Natural killer cell (primary cell): ENCODE measurements at regions of chr19 and their contacts with region 1.

Region 1: GRCh38 chr19:40603389-40604135 is 2.4 kb downstream of the LTBP4 start:
- DNase-seq: peak; percentile 92 to 98
- ATAC-seq: peak; percentile 77 to 89 (median 78)
- H3K4me3 ChIP-seq: peak overlapping the region; percentile 22
- H3K4me3 Mint-ChIP-seq: peak overlapping the region; percentile 89
- H3K27ac ChIP-seq: peak overlapping the region; percentile 2
- H3K27ac Mint-ChIP-seq: peak overlapping the region; percentile 75 to 87
- H3K4me1 ChIP-seq: peaks cover 74% of the 10 kb centered on the region
- H3K4me1 Mint-ChIP-seq: peaks cover 37 to 70% of the 10 kb centered on the region in 2 donors
- H3K27me3 ChIP-seq: peaks cover 36% of the 10 kb centered on the region
- H3K27me3 Mint-ChIP-seq: peaks cover 8 to 37% of the 10 kb centered on the region in 2 donors
- CTCF ChIP-seq: no peak

Region 2: DNA sequence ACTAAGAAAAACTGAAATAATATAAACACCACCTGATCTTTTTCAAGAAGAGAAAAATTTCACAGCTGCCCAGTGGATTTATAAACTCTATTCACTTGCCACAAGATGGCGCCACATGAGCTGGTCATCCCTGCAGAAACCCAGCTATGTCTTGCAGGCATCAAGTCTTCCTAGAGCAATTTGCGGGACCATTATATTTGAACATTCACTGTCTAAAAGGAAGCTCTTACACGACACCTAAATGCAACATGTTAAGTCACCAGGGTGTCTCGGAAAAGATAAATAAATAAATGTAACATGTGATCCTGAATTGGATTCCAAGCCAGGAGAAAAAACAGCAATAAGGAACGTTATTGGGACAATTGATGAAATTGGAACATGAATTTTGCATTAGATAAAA is 298.2 kb before region 1 on chr19:
- intact Hi-C with region 1: loop called (anchors 1 kb)
- DNase-seq: peak; percentile 53 to 87
- ATAC-seq: peak; percentile 78 to 83 (median 80)
- H3K4me3 ChIP-seq: no peak overlapping the region
- H3K4me3 Mint-ChIP-seq: no peak overlapping the region
- H3K27ac ChIP-seq: no peak overlapping the region
- H3K27ac Mint-ChIP-seq: no peak overlapping the region
- H3K4me1 ChIP-seq: no peaks in the 10 kb centered on the region
- H3K4me1 Mint-ChIP-seq: peaks cover 5% of the 10 kb centered on the region in 2 donors
- H3K27me3 ChIP-seq: no peaks in the 10 kb centered on the region
- H3K27me3 Mint-ChIP-seq: no peaks in the 10 kb centered on the region
- CTCF ChIP-seq: peak; percentile 87

Region 3: GRCh38 chr19:40458597-40458974 is 145.0 kb before region 1 on chr19:
- intact Hi-C with region 1: no loop called
- DNase-seq: no peak
- ATAC-seq: no peak
- H3K4me3 ChIP-seq: no peak overlapping the region
- H3K4me3 Mint-ChIP-seq: no peak overlapping the region
- H3K27ac ChIP-seq: no peak overlapping the region
- H3K27ac Mint-ChIP-seq: no peak overlapping the region
- H3K4me1 ChIP-seq: peaks cover 5% of the 10 kb centered on the region
- H3K4me1 Mint-ChIP-seq: no peaks in the 10 kb centered on the region
- H3K27me3 ChIP-seq: no peaks in the 10 kb centered on the region
- H3K27me3 Mint-ChIP-seq: no peaks in the 10 kb centered on the region
- CTCF ChIP-seq: no peak

Region 4: GRCh38 chr19:40529093-40529954 is 74.2 kb before region 1 on chr19:
- intact Hi-C with region 1: loop called (anchors 2 kb)
- DNase-seq: peak; percentile 88 to 95
- ATAC-seq: peak; percentile 92 to 95 (median 92)
- H3K4me3 ChIP-seq: peak overlapping the region; percentile 35
- H3K4me3 Mint-ChIP-seq: peak overlapping the region; percentile 73
- H3K27ac ChIP-seq: no peak overlapping the region
- H3K27ac Mint-ChIP-seq: peak overlapping the region in 1 of 2 donors; percentile 64
- H3K4me1 ChIP-seq: peaks cover 15% of the 10 kb centered on the region
- H3K4me1 Mint-ChIP-seq: peaks cover 5 to 22% of the 10 kb centered on the region in 2 donors
- H3K27me3 ChIP-seq: peaks cover 16% of the 10 kb centered on the region
- H3K27me3 Mint-ChIP-seq: peaks cover 18 to 30% of the 10 kb centered on the region in 2 donors
- CTCF ChIP-seq: peak; percentile 90

Region 5: GRCh38 chr19:40570313-40571004 is 33.1 kb before region 1 on chr19:
- intact Hi-C with region 1: loop called (anchors 2 kb)
- DNase-seq: peak; percentile 94 to 100
- ATAC-seq: peak; percentile 90 to 97 (median 90)
- H3K4me3 ChIP-seq: no peak overlapping the region
- H3K4me3 Mint-ChIP-seq: peak overlapping the region; percentile 68
- H3K27ac ChIP-seq: peak overlapping the region; percentile 13
- H3K27ac Mint-ChIP-seq: peak overlapping the region; percentile 63 to 80
- H3K4me1 ChIP-seq: peaks cover 25% of the 10 kb centered on the region
- H3K4me1 Mint-ChIP-seq: peaks cover 12 to 14% of the 10 kb centered on the region in 2 donors
- H3K27me3 ChIP-seq: peaks cover 20% of the 10 kb centered on the region
- H3K27me3 Mint-ChIP-seq: peaks cover 7 to 14% of the 10 kb centered on the region in 2 donors
- CTCF ChIP-seq: no peak

Region 6: DNA sequence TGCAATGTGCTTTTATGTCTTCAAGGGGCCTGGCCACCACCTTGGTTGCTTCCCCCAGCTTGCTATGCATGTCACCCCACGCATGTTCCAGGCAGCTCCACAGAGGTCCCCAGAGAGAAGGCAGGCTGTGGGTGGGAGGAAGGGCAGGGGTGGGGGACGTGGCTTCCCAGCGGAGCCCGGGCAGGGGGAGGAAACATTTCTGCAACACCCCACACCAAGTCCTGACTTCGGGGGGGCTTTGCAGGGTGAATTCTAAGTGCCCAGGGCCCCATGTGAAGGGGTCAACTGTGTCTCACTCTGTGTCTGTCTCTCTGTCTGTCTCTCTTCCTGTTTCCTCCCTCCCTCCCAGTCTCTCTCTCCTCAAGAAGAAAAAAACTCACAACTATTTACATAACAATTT is 37.2 kb after region 1 on chr19:
- intact Hi-C with region 1: no loop called
- DNase-seq: no peak
- ATAC-seq: peak in 1 of 3 donors; percentile 17
- H3K4me3 ChIP-seq: no peak overlapping the region
- H3K4me3 Mint-ChIP-seq: no peak overlapping the region
- H3K27ac ChIP-seq: no peak overlapping the region
- H3K27ac Mint-ChIP-seq: no peak overlapping the region
- H3K4me1 ChIP-seq: no peaks in the 10 kb centered on the region
- H3K4me1 Mint-ChIP-seq: no peaks in the 10 kb centered on the region
- H3K27me3 ChIP-seq: no peaks in the 10 kb centered on the region
- H3K27me3 Mint-ChIP-seq: no peaks in the 10 kb centered on the region
- CTCF ChIP-seq: no peak

Region 7: DNA sequence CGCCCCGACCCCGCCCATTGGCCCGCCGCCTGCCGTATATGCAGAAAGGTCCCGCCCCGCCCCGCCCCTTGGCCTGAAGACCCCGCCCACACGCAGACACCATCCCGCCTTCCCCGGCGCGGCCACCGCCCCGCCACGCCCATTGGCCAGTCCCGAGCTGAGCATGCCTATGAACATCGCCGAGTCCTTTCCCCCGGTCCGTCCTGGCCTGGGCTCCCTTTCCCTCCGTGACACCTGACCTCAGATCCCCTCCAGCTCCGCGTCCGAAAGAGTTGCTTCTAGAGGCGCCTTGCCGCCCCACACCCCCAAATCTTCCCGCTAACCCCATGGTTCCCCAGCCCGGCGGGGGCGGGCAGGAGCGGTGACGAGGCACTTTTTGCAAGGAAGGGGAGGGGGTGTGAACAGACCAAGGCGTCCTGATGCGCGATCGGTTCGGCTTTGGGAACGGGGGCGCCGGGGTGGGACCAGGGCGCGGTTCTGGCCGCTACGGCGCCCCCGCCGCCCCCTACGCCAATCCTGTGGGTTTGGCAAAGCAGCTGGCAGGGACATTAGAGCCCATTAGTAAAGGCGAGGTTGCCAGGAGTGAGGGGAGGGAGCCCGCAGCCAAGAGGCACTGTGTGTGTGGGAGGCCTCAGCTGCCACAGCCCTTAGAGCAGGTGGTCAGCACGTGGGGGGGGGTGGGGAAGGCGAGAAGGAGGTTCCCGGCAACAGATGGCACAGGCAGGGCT is 87.3 kb after region 1 on chr19:
- intact Hi-C with region 1: no loop called
- DNase-seq: peak; percentile 74 to 92
- ATAC-seq: peak; percentile 56 to 82 (median 65)
- H3K4me3 ChIP-seq: peak overlapping the region; percentile 34
- H3K4me3 Mint-ChIP-seq: peak overlapping the region; percentile 90
- H3K27ac ChIP-seq: peak overlapping the region; percentile 39
- H3K27ac Mint-ChIP-seq: peak overlapping the region; percentile 77 to 94
- H3K4me1 ChIP-seq: peaks cover 45% of the 10 kb centered on the region
- H3K4me1 Mint-ChIP-seq: peaks cover 0 to 12% of the 10 kb centered on the region in 2 donors
- H3K27me3 ChIP-seq: no peaks in the 10 kb centered on the region
- H3K27me3 Mint-ChIP-seq: no peaks in the 10 kb centered on the region
- CTCF ChIP-seq: no peak

Region 8: GRCh38 chr19:41541990-41542584 is 938.5 kb after region 1 on chr19:
- intact Hi-C with region 1: loop called (anchors 10 kb)
- DNase-seq: peak; percentile 74 to 88
- ATAC-seq: peak; percentile 32 to 57 (median 57)
- H3K4me3 ChIP-seq: no peak overlapping the region
- H3K4me3 Mint-ChIP-seq: peak overlapping the region; percentile 65
- H3K27ac ChIP-seq: no peak overlapping the region
- H3K27ac Mint-ChIP-seq: peak overlapping the region in 1 of 2 donors; percentile 1
- H3K4me1 ChIP-seq: peaks cover 33% of the 10 kb centered on the region
- H3K4me1 Mint-ChIP-seq: peaks cover 40 to 41% of the 10 kb centered on the region in 2 donors
- H3K27me3 ChIP-seq: no peaks in the 10 kb centered on the region
- H3K27me3 Mint-ChIP-seq: no peaks in the 10 kb centered on the region
- CTCF ChIP-seq: peak; percentile 92